Activated naive CD4-positive, alpha-beta T cell treated with anti-CD3 and anti-CD28 coated beads for 36 hours (primary cell): ENCODE measurements at regions of chr17 and their contacts with region 1.

Region 1: GRCh38 chr17:28951991-28952975 is 965 bp upstream of the PHF12 start:
- DNase-seq: peak; percentile 98
- H3K4me3 Mint-ChIP-seq: no peak overlapping the region
- H3K27ac Mint-ChIP-seq: no peak overlapping the region
- H3K4me1 Mint-ChIP-seq: peaks cover 17% of the 10 kb centered on the region
- H3K27me3 Mint-ChIP-seq: no peaks in the 10 kb centered on the region

Region 2: DNA sequence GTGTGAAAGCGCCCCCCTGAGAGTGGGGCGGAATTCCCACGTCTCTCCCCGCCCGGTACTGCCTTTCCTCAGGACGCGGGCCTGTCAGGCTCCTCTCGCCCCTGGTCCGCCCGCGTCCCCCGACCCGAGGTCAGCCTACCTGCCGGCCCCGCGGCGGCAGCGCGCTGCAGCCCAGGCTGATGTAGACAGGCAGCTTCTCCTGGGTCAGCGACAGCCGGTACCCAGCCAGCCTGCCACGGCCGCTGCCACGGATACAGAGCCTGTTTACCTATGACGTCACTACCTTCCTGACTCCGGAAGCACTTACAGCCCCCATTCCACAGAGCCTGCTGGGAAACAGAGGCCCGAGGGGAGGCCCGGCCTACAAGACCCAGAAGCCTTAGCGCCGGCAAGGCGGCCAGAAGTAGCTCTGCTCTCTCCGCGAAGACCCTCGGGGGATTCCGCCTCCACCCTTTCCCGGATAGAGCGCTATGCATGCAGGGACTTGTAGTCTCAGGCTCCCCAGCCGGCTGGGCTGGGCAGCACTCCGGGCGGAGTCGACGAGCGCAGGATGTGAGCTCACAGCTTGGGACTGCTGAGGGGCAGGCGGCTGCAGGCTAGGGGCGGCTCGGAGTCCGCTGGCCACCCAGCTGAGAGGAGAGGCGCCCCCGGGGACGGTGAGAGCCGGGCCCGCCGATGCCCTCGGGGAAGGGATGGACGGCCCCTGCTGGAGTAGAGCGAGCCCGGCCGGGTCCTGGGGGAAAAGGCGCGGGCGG is 616.9 kb before region 1 on chr17 and contains the starts of genes IFT20 and TNFAIP1:
- CTCF ChIA-PET with region 1: no interaction called
- intact Hi-C with region 1: loop called (anchors 1 kb)
- DNase-seq: peak; percentile 99
- H3K4me3 Mint-ChIP-seq: peak within 1 kb of the TSS; percentile 95
- H3K27ac Mint-ChIP-seq: peak within 1 kb of the TSS; percentile 90
- H3K4me1 Mint-ChIP-seq: peaks cover 34% of the 10 kb centered on the region
- H3K27me3 Mint-ChIP-seq: no peaks in the 10 kb centered on the region
- total RNA-seq, gene IFT20: 17.9 to 18.1 TPM
- total RNA-seq, gene TNFAIP1: 18.6 to 18.7 TPM

Region 3: DNA sequence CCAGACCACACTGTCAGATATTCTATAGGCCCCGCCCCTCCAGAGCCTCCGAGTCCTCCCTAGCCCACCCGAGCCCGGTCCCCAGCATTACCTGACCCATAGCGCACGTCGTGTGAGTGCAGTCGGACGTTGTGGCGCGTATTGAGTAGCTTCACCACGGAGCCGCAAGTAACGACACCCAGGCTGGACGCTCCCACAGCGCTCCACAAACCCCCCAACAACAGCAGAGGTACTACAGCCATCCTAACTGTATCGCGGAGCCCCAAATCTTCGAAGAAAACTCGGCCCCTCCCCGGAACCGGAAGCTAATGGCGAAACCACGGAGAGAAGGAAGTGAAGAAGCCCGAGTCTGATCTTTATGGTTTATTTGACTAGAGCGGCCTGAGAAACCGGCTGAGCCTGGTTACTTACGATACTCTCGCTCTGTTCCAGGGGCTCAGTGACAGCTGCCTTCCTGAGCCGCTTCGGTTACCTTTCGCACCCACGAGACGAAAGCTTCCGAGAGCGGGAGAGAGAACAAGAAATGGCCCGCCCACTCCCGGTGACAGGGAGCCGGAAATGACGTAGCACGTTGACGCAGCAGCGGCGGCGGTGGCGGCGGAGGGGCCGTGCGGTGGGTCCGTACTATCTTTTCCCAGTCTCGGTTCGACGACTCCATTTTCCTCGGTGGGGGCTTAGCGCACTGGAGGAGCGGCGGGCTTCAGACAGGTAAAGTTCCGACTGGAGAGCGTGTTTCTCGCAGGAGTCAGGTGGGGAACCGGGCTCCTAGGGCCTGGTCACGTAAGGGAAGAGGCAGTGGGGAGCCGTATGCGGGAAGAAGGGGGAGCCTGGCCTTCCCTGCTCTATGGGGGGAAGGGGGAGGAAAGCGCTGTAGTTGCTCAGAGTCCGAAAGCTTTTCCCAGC is 290.4 kb before region 1 on chr17 and contains the starts of genes SDF2 and SUPT6H:
- CTCF ChIA-PET with region 1: no interaction called
- intact Hi-C with region 1: loop called (anchors 5 kb)
- DNase-seq: peak; percentile 97
- H3K4me3 Mint-ChIP-seq: peak within 1 kb of the TSS; percentile 98
- H3K27ac Mint-ChIP-seq: peak within 1 kb of the TSS; percentile 100
- H3K4me1 Mint-ChIP-seq: peaks cover 53% of the 10 kb centered on the region
- H3K27me3 Mint-ChIP-seq: no peaks in the 10 kb centered on the region
- total RNA-seq, gene SDF2: 30.3 to 30.9 TPM
- total RNA-seq, gene SUPT6H: 50.8 to 52.1 TPM

Region 4: DNA sequence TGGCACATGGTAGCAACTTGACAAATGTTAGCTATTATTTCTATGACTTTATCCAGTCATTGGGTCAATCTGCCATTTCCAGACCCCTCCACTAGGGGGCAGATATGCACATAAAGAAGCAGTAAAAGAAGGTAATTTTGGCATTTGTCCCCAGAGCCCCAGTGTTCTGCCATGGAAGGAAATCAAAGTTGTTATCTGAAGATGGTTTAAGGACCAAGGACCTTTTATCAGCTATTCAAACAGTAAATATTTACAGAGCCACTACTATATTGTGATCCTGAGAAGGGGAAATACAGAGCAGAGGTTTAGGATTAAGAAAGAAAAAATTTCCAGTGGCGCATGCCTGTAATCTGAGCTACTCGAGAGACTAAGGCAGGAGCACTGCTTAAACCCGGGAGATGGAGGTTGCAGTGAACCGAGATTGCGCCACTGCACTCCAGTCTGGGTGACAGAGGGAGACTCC is 188.4 kb before region 1 on chr17:
- CTCF ChIA-PET with region 1: interaction called, 26 read pairs
- intact Hi-C with region 1: loop called (anchors 2 kb)
- DNase-seq: peak; percentile 93
- H3K4me3 Mint-ChIP-seq: no peak overlapping the region
- H3K27ac Mint-ChIP-seq: no peak overlapping the region
- H3K4me1 Mint-ChIP-seq: peaks cover 12% of the 10 kb centered on the region
- H3K27me3 Mint-ChIP-seq: no peaks in the 10 kb centered on the region

Region 5: DNA sequence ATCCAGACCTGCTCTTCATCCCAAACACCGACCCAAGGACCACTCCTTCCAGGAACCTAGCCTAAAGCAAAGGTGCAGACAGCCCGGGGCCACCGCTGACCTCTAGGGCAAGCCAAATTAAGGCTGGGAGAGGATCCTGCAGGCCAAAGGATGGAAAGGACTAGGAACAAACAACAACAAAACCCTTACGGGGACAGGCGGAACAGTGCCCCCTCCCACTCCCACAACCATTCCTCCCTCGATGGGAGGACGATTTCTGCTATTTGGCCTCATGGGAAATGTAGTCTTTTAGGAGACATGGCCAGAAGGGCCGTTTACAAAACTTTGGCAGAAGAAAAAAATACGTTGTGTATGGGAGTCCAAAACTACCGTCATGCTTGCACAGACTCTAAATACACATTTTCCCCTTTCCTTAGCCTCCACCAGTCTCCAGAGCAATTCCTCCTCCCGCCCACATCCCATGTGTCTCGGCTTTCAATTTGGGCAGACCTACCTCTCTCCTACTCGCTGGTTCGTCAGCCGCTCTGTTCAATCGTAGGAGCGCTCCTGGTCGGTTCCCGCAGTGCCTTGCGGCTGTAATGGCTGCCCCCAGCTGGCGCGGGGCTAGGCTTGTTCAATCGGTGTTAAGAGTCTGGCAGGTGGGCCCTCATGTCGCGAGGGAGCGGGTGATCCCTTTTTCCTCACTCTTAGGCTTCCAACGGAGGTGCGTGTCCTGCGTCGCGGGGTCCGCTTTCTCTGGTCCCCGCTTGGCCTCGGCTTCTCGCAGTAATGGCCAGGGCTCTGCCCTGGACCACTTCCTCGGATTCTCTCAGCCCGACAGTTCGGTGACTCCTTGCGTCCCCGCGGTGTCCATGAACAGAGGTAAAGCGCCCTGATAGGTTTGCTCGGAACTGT is 97.6 kb before region 1 on chr17 and contains the start of gene ERAL1:
- CTCF ChIA-PET with region 1: interaction called, 5 read pairs
- intact Hi-C with region 1: loop called (anchors 1 kb)
- DNase-seq: peak; percentile 93
- H3K4me3 Mint-ChIP-seq: peak within 1 kb of the TSS; percentile 79
- H3K27ac Mint-ChIP-seq: peak within 1 kb of the TSS; percentile 87
- H3K4me1 Mint-ChIP-seq: peaks cover 25% of the 10 kb centered on the region
- H3K27me3 Mint-ChIP-seq: no peaks in the 10 kb centered on the region
- total RNA-seq, gene ERAL1: 51.2 to 60.4 TPM

Region 6: DNA sequence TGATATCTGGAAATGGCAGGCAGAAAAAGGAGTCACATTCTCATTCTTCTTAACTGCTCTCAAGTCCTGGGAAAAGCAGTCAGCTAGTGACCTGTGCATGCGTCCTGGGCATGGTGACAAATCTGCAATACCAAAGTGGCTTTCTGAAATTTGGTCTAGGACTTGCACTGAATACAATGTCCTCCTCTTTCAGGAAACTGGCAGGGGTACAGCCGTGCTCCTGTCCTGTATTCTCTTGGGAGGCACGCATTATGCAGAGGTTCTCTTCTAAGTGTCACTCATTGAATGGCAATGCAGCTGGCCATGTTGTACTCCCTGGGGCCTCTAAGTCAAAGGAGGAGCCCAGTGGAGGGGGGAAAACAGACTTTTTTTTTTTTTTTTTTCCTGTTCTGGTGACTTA is 11.6 kb before region 1 on chr17:
- CTCF ChIA-PET with region 1: interaction called, 6 read pairs
- intact Hi-C with region 1: loop called (anchors 1 kb)
- DNase-seq: no peak
- H3K4me3 Mint-ChIP-seq: no peak overlapping the region
- H3K27ac Mint-ChIP-seq: no peak overlapping the region
- H3K4me1 Mint-ChIP-seq: peaks cover 89% of the 10 kb centered on the region
- H3K27me3 Mint-ChIP-seq: no peaks in the 10 kb centered on the region

Region 7: DNA sequence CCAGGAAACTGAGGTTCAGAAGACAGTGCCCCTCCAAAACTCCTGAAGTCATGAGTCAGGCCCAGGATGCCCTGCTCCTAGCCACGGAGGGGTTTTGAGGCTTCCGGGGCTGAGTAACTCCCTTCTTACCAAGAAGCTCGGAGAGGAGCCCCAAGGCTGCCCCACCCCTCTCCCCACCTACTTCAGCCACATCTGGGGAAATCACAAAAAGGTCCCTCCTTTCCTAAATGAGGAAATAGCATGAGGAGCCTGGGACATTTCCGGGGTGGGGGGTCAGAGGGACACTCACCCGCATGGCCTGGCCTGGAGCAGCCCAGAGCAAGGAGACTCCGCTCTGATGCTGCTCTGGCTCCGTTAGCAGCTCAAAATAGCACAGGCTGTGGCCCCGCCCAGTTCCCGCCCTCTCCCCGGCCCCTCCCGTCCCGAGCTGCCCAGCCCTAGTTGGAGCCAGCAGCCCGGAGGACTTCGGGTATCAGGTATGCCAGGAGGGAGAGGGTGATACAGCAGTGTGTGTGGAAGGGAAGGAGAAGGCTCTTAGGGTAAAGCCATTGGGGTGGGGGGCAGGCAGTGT is 187.9 kb after region 1 on chr17:
- CTCF ChIA-PET with region 1: no interaction called
- intact Hi-C with region 1: loop called (anchors 1 kb)
- DNase-seq: peak; percentile 89
- H3K4me3 Mint-ChIP-seq: peak overlapping the region; percentile 83
- H3K27ac Mint-ChIP-seq: peak overlapping the region; percentile 93
- H3K4me1 Mint-ChIP-seq: peaks cover 66% of the 10 kb centered on the region
- H3K27me3 Mint-ChIP-seq: no peaks in the 10 kb centered on the region